Calu3 (cell line): ENCODE measurements at regions of chr2 and their contacts with region 1.

Region 1: GRCh38 chr2:98479959-98480524 is 35.4 kb downstream of the INPP4A start:
- DNase-seq: peak; percentile 70
- H3K4me3 Mint-ChIP-seq: no peak overlapping the region
- H3K27ac Mint-ChIP-seq: peak overlapping the region; percentile 36
- H3K4me1 Mint-ChIP-seq: peaks cover 95% of the 10 kb centered on the region
- H3K27me3 Mint-ChIP-seq: no peaks in the 10 kb centered on the region
- CTCF ChIP-seq: no peak

Region 2: DNA sequence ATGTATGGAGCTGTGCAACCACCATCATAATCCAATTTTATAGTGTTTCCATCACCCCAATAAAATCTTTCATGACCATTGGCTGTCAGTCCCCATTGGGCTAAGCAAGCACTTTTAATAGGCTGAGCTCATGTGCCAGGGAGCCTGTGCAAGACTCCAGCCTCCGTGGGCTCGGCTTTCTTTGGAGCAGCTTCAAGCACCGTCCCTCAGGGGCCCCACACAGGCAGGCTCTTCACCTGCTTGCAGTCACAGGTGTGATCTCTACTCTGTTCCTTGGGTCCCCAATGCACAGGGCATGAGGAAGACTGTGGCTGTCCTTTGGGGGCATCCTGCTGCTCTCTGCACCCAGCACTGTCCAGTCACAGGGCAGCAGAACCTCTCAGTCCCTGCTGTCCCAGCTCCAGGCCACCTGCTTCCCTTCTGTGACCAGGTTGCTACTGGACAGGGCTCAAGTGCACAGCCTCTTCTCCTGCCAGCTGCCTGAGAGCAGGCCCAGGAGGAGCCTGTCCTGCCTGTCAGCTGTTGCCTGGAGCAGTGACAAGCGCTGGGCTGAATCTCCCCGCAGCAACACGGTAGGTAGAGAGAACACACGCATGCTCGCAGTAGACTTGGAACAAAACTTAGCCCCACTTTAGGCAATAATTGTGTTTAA is 443.6 kb before region 1 on chr2:
- CTCF ChIA-PET with region 1: no interaction called
- intact Hi-C with region 1: no loop called
- DNase-seq: no peak
- H3K4me3 Mint-ChIP-seq: no peak overlapping the region
- H3K27ac Mint-ChIP-seq: no peak overlapping the region
- H3K4me1 Mint-ChIP-seq: no peaks in the 10 kb centered on the region
- H3K27me3 Mint-ChIP-seq: peaks cover 15% of the 10 kb centered on the region
- CTCF ChIP-seq: no peak

Region 3: DNA sequence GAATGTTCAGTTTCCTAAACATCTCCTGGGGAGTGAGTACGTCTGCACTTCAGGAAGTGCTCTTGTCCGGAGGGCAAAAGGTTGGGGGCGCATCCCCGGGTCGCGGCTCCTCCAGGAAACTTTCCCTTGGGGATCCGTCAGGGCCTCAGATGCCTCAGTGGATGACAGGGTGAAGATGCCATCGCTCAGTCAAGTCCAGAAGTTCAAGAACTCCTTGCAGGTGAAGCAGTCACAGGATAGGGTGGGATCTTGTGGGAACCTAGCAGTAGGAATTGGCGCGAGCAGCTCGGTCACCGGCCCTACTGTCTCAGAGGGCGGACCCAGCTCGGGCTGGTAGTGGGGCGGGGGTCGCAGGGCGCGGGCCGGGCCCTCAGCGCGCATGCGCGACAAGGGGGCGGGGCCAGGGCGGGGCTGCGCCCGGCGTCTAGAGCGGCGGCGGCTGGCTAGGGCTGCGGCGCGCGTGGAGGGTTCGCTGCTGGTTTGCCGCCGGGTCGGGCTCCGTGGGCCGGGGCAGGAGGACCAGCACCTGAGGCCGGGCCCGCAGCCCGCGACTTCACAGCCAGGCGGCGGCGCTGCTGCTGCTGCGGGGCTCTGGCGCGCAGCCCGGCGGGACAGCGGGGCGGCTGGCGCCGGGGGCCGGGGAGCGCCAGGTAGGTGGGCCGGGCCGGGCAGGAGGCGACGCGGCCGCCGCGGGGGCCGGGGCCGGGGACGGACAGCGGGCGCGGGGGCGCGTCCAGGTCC is 35.4 kb before region 1 on chr2 and contains the start of gene INPP4A:
- CTCF ChIA-PET with region 1: no interaction called
- intact Hi-C with region 1: loop called (anchors 5 kb)
- DNase-seq: peak; percentile 72
- H3K4me3 Mint-ChIP-seq: peak within 1 kb of the TSS; percentile 91
- H3K27ac Mint-ChIP-seq: peak within 1 kb of the TSS; percentile 68
- H3K4me1 Mint-ChIP-seq: peaks cover 44% of the 10 kb centered on the region
- H3K27me3 Mint-ChIP-seq: no peaks in the 10 kb centered on the region
- CTCF ChIP-seq: no peak
- total RNA-seq, gene INPP4A: 26.7 and 28.2 TPM in 2 replicates